Uterus (tissue), 4 donors: ENCODE measurements at regions of chr2 and their contacts with region 1.

Region 1: DNA sequence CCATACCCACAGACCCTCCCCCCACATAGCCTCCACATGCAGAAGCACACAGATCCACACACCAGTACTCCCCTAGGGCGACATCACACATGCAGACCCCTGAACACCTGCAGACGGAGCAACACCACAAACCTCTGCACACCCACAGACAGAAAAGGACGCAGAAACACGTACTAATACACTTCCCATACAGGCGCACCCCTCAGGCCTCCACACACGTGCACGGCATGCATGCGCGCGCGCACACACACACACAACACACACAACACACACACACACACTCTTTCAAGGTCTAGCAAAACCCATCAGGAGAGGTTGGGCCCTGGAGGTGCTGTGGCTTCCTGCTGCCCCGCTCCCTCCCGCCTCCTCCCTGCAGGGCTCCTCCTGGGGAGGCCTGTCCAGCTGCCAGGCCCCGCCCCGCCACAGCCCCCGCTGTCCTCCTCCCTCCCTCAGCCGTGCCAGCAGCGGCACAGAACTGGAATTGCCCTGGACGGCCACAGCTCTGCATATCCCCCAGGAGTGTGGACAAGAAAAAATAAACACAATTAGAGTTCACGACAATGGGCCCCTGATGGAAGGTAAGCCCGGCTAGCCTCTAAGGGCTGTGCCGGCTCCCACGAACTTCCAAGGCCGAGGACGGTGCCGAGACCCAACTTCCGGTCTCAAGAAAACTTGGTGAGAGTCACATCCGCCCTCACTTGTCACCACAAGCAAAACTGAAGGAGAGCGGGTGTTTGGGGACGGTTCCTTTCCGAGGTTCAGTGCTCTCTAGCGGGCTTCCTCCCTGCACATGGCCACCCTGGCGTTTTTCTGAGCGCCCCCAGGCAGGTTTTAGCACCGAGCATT is 6.8 kb downstream of the ZFP36L2 start:
- DNase-seq: peak; percentile 87
- H3K4me3 ChIP-seq: peak overlapping the region; percentile 35 to 40
- H3K27ac ChIP-seq: peak overlapping the region; percentile 98 to 99
- H3K4me1 ChIP-seq: peaks cover 4 to 19% of the 10 kb centered on the region in 2 donors
- H3K27me3 ChIP-seq: no peaks in the 10 kb centered on the region
- CTCF ChIP-seq: no peak
- POLR2A ChIP-seq: peak in 1 of 2 donors; percentile 41

Region 2: DNA sequence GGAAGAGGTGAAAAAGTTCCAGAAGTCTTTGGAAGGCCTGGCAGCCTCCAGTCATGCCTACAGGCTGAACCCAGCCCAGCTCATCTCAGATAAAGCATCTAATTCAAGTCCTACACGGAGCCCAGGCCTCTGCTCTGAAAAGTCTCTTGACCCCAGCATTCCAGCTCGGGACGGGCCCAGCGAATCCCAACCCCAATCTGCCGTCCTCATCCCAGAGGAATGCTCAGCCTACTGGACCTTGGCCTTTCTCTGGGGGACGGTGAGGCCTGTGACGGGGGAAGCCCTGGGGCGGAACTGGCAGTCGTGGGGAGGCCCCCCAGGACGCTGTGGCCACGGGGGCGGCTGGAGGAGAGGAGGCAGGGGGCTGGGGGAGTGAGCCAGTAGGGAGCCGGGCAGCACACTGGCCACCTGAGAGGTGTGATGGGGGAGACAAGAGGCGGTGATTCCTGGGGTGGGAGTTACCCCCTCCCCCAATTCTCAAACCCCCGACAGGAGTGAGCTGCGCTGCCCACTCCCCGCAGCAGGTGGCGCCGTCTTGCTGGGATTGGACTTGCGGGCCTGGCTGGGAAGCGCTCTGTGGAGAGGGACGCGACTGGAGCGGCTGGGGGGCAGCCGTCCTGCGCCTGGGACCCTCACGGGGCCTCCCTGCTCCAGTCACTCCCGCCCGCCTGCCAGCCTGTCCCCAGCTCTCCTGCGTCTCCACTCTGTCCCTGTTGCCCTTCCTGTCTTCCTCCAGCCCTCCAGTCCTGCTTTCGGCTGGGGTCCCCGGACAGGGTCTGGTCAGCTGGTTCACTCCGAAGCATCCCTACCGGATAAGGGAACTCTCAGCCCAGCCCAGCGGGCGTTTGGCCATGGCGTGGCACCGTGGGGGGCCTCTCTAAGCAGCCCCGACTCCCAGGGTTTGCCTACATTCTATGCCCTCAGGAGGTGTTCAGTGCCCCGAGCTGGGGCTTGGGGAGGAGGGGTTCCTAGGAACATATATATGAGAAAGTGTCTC is 244.6 kb before region 1 on chr2:
- intact Hi-C with region 1: loop called (anchors 5 kb)
- DNase-seq: peak; percentile 81 to 87
- H3K4me3 ChIP-seq: peak overlapping the region; percentile 18 to 36
- H3K27ac ChIP-seq: peak overlapping the region; percentile 78 to 80
- H3K4me1 ChIP-seq: peaks cover 0 to 6% of the 10 kb centered on the region in 2 donors
- H3K27me3 ChIP-seq: no peaks in the 10 kb centered on the region
- CTCF ChIP-seq: peak; percentile 95 to 96 (median 96)
- POLR2A ChIP-seq: peak in 1 of 2 donors; percentile 28

Region 3: DNA sequence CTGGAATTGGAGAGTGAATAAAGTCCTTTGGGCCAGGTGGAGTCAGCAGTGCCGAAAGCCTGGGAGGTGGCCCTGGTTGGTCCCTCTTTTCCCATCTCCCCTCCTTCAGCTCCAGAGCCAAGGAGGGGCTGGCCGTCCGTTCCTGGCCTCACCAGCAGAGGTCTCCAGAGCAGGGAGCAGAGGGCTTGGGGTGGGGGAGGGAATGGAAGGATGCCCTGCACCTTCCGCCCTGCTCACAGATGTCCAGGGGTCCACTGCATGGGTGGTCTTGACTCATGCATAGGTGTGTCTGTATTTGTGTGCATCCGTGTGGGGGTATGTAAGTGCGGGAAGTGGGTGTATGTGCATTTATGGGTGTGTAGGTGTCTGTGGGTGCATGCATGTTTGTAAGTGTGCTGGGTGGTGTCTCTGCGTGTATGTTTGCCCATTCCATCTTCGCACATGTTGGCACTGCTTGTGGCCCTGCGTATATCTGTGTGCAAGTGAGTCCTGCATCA is 195.0 kb before region 1 on chr2:
- intact Hi-C with region 1: loop called (anchors 5 kb)
- DNase-seq: peak; percentile 72 to 75
- H3K4me3 ChIP-seq: no peak overlapping the region
- H3K27ac ChIP-seq: peak overlapping the region; percentile 57 to 64
- H3K4me1 ChIP-seq: peaks cover 0 to 5% of the 10 kb centered on the region in 2 donors
- H3K27me3 ChIP-seq: no peaks in the 10 kb centered on the region
- CTCF ChIP-seq: peak; percentile 83 to 92 (median 89)
- POLR2A ChIP-seq: no peak